ENCODE measurements at regions of chr3 and their contacts with region 1.

Region 1: GRCh38 chr3:129627429-129628168 is 21.1 kb upstream of the PLXND1 start:
- H3K4me3 Mint-ChIP-seq: peak overlapping the region; percentile 81
- H3K27ac Mint-ChIP-seq: peak overlapping the region; percentile 95
- H3K4me1 Mint-ChIP-seq: peaks cover 53% of the 10 kb centered on the region
- H3K27me3 Mint-ChIP-seq: no peaks in the 10 kb centered on the region

Region 2: GRCh38 chr3:129490242-129491045 is 137.2 kb before region 1 on chr3:
- intact Hi-C with region 1: loop called (anchors 2 kb)
- H3K4me3 Mint-ChIP-seq: no peak overlapping the region
- H3K27ac Mint-ChIP-seq: peak overlapping the region; percentile 55
- H3K4me1 Mint-ChIP-seq: peaks cover 44% of the 10 kb centered on the region
- H3K27me3 Mint-ChIP-seq: no peaks in the 10 kb centered on the region

Measured in dendritic cell treated with granulocyte-macrophage colony-stimulating factor and Interleukin-4, amounts not matched to agents 40 ng/mL and 50 ng/mL, for 4 days (primary cell).